ENCODE measurements at regions of chr3 and their contacts with region 1.

Region 1: GRCh38 chr3:179929091-179929529 is 107.6 kb downstream of the PEX5L start:
- DNase-seq: peak; percentile 36
- H3K4me3 ChIP-seq: no peak overlapping the region
- H3K27ac ChIP-seq: no peak overlapping the region
- H3K27me3 ChIP-seq: no peaks in the 10 kb centered on the region
- CTCF ChIP-seq: peak; percentile 91

Region 2: DNA sequence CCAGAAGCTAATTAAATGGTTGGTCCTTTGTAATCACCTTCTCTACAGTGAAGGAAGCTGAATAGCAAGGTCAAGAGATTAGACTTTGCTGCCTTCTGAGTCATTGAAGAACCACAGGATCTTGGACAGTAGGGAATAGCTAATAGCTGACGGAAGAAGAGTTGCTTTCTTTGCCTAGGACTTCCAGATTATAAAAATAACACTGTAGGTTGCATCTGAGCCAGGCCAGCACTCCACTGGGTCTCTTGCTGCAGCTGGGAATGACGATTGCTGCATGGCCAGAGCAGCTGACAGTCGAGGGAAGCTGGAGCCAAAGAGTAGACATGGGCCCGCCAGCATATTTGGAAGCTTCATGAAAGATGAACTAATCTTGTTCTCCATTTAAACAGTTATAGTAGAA is 1474.4 kb before region 1 on chr3:
- CTCF ChIA-PET with region 1: no interaction called
- POLR2A ChIA-PET with region 1: no interaction called
- DNase-seq: no peak
- H3K4me3 ChIP-seq: no peak overlapping the region
- H3K27ac ChIP-seq: no peak overlapping the region
- H3K27me3 ChIP-seq: peaks cover 3% of the 10 kb centered on the region
- CTCF ChIP-seq: no peak

Region 3: DNA sequence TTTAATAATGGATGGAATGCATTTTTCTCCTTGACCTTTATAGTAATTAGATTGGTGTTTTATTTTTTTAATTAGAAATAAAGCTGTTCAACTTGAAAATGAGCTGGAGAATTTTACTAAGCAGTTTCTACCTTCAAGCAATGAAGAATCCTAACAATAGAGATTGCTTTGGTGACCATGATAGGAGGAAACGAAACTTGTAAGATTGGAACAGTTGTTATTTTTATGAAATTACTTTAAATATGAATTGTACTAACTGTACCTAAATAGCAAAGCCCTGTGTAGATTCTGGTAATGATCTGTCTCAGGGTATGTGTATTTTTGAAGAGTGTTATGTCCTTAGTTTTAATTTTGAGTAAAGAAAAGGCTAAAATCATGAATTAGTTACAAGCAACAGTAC is 537.2 kb before region 1 on chr3:
- CTCF ChIA-PET with region 1: no interaction called
- POLR2A ChIA-PET with region 1: no interaction called
- DNase-seq: no peak
- H3K4me3 ChIP-seq: no peak overlapping the region
- H3K27ac ChIP-seq: no peak overlapping the region
- H3K27me3 ChIP-seq: no peaks in the 10 kb centered on the region
- CTCF ChIP-seq: no peak

Region 4: DNA sequence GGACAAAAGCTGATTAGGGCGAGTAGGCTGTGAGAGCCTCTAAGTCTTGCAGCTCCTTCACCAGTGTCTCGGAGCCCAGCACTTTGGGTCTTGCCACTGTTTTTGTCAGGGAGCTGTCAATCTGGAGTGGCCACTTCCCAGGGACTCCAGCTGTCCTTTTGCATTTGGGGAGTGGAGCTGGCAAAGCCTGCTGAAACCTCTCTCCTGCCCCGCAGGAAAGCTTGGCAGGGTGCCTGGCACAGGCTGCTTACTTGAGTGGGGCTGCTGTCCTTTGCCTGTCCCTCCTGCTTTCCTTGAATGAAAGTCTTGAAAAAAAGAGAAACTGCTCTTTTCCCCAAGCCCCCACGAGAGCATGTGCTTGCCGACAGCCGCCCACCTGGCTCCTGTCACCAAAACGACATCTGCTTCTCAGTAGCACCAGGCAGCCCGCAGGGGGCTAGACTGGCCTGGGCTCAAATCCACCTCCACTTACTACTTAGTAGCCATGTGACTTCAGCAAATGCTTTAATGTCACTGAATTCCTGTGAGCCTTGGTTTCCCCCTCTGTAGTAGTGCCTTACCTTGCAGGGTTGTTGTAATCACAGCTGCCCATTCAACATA is 262.6 kb before region 1 on chr3:
- CTCF ChIA-PET with region 1: no interaction called
- POLR2A ChIA-PET with region 1: no interaction called
- DNase-seq: no peak
- H3K4me3 ChIP-seq: no peak overlapping the region
- H3K27ac ChIP-seq: no peak overlapping the region
- H3K27me3 ChIP-seq: no peaks in the 10 kb centered on the region
- CTCF ChIP-seq: peak; percentile 30; the same call in 1 of the 2 replicates

Region 5: GRCh38 chr3:179768080-179768479 is 161.0 kb before region 1 on chr3:
- CTCF ChIA-PET with region 1: interaction called, 17 read pairs
- POLR2A ChIA-PET with region 1: no interaction called
- DNase-seq: peak; percentile 32
- H3K4me3 ChIP-seq: no peak overlapping the region
- H3K27ac ChIP-seq: no peak overlapping the region
- H3K27me3 ChIP-seq: no peaks in the 10 kb centered on the region
- CTCF ChIP-seq: peak; percentile 79

Region 6: DNA sequence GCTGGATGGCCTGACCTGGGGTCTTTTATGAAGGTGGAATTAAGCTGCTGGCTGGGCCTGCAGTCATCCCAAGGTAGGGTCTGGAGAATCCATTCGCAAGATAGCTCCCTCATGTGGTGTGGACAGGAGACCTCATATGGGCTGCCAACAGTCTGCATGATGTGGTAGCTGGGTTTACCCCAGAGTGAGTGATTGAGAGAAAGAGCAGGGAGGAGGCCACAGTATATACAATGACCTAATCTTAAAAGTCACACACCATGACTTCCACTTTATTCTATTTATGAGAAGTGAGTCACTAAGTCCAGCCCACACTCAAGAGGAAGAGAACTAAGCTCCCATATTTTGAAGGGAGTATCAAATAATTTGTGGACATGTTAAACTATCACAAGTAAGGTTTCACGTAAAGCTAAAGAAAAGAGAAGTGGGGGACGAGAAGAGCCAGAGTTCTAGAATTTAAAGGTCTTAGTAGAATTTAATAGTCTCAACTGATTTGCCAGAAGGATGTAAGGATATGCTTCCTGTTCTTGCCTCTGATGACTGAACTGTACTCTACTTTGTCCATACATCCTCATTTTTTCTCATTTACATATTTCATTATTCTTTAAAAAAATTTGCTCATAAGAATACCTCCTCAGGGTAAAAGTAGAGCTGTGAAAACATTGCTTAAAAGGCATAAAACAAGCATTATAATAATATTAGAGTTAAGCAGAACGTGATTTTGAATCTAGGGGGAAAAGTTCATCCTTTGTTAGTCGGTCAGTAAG is 76.8 kb before region 1 on chr3:
- CTCF ChIA-PET with region 1: interaction called, 12 read pairs
- POLR2A ChIA-PET with region 1: no interaction called
- DNase-seq: peak; percentile 59
- H3K4me3 ChIP-seq: no peak overlapping the region
- H3K27ac ChIP-seq: no peak overlapping the region
- H3K27me3 ChIP-seq: no peaks in the 10 kb centered on the region
- CTCF ChIP-seq: peak; percentile 51

Region 7: DNA sequence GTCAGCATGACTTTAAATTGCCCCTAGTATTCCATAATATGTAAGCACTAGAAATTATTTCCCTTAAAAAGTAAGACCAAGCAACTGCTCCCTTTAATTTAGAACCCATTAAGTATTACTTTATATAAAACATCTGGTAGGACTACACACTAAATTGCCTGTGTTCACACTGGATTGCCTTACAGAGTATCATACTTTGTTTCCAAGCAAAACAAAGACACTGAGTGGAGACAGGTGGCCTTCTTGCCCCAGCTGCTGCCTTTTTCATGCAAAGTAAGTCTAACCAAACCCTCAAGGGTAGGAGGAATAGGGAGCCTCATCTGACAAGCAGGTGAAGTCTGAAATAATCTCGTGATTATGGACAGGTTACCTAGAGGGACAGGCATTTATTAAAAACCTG is 20.3 kb after region 1 on chr3:
- CTCF ChIA-PET with region 1: interaction called, 12 read pairs
- POLR2A ChIA-PET with region 1: no interaction called
- DNase-seq: no peak
- H3K4me3 ChIP-seq: no peak overlapping the region
- H3K27ac ChIP-seq: no peak overlapping the region
- H3K27me3 ChIP-seq: no peaks in the 10 kb centered on the region
- CTCF ChIP-seq: no peak

Region 8: DNA sequence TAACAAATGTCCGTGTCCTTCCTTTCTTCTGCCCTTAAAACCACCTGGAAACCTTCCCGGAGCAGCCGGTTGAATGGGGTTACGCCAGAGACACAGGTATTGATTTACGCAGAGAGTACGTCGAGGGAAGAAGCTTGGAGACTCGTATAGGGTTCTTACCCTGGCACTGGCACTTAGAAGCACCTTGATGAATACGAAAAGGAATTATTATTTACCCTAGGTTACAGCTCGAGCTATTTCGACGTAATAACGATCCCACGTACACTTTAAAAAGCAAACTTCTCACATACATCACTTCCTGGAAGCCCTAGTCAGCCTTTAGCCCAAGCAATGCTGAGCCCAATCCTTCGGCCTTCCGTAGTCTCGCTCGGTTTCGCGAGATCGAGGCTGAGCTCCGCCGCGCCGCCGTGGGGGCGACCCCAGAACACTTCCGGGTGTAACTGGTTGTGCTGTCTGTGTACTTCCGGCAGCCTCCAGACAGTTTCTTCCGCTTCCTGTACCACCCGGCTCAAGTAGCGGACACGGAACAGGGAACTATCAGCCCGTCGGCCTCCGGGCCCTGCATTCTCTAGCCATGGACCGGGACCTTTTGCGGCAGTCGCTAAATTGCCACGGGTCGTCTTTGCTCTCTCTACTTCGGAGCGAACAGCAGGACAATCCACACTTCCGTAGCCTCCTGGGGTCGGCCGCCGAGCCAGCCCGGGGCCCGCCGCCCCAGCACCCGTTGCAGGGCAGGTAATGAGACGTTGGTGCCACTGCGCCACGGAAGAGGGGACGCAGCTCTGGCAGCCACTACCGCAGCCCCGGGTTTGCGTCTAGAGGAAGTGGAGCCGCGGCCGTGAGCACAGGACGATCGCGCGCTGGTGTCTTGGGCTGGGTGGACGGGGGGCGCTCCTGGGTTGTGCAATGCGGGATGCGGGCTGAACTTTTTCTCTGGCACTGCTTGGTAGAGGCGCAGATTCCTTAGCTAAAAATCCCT is 672.9 kb after region 1 on chr3 and contains the start of gene TTC14:
- CTCF ChIA-PET with region 1: interaction called, 172 read pairs
- POLR2A ChIA-PET with region 1: interaction called, 3 read pairs
- DNase-seq: peak; percentile 89
- H3K4me3 ChIP-seq: peak within 1 kb of the TSS; percentile 81
- H3K27ac ChIP-seq: peak within 1 kb of the TSS; percentile 85
- H3K27me3 ChIP-seq: no peaks in the 10 kb centered on the region
- CTCF ChIP-seq: no peak
- polyA plus RNA-seq, gene TTC14: 29.3 and 48.6 TPM in 2 replicates